Ovary (tissue), 10 donors: ENCODE measurements at regions of chr7 and their contacts with region 1.

Region 1: GRCh38 chr7:44978511-44979366 is at the start of gene MYO1G:
- DNase-seq: no peak
- H3K4me3 ChIP-seq: no peak within 1 kb of the TSS
- H3K27ac ChIP-seq: no peak within 1 kb of the TSS
- H3K4me1 ChIP-seq: no peaks in the 10 kb centered on the region
- H3K27me3 ChIP-seq: no peaks in the 10 kb centered on the region
- CTCF ChIP-seq: no peak
- EP300 ChIP-seq: no peak
- POLR2A ChIP-seq: no peak
- total RNA-seq, gene MYO1G: 0.48 to 2.4 (median 1.0) TPM

Region 2: DNA sequence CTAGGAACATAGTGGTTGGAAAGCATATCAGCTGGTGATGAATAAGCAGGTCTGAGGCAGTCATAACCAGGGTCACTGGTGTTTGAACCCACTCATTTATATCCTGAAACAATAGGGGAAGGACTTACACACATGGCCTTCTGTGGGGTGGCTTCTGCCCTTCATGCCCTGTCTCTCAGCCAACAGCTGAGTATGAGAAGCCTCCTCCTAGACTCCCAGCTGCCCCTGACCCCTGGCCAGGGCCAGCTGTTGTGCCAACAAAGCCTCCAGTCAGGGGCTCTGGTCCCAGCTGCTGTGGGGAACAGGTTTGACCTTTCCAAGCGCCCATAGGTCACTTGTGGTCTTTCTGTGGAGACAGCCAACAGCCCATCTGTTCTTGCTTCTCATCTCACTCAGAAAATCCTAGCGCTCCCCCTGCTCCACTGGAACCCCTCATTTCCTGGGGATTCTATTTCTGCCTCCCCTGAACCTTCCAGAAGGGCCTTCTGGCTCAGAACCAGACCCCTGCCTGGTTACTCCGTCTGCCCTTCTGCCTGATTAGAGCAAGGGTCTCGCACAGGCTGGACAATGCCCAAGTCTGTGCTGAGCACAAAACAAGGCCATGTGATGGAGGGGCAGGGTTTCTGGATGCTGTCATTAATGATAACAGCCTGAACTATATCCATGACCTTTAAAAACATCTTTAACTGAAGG is 83.7 kb before region 1 on chr7:
- intact Hi-C with region 1: loop called in 1 of 4 experiments (anchors 5 kb)
- DNase-seq: no peak
- H3K4me3 ChIP-seq: no peak overlapping the region
- H3K27ac ChIP-seq: no peak overlapping the region
- H3K4me1 ChIP-seq: no peaks in the 10 kb centered on the region
- H3K27me3 ChIP-seq: no peaks in the 10 kb centered on the region
- CTCF ChIP-seq: no peak
- EP300 ChIP-seq: no peak
- POLR2A ChIP-seq: no peak